Breast epithelium (tissue), 4 donors: ENCODE measurements at regions of chr19 and their contacts with region 1.

Region 1: GRCh38 chr19:54279406-54279962 is 1.4 kb downstream of the LILRB2 start:
- DNase-seq: no peak
- H3K4me3 ChIP-seq: no peak overlapping the region
- H3K27ac ChIP-seq: no peak overlapping the region
- H3K4me1 ChIP-seq: no peaks in the 10 kb centered on the region
- H3K27me3 ChIP-seq: peaks cover 0 to 48% of the 10 kb centered on the region in 2 donors
- CTCF ChIP-seq: no peak
- POLR2A ChIP-seq: no peak

Region 2: DNA sequence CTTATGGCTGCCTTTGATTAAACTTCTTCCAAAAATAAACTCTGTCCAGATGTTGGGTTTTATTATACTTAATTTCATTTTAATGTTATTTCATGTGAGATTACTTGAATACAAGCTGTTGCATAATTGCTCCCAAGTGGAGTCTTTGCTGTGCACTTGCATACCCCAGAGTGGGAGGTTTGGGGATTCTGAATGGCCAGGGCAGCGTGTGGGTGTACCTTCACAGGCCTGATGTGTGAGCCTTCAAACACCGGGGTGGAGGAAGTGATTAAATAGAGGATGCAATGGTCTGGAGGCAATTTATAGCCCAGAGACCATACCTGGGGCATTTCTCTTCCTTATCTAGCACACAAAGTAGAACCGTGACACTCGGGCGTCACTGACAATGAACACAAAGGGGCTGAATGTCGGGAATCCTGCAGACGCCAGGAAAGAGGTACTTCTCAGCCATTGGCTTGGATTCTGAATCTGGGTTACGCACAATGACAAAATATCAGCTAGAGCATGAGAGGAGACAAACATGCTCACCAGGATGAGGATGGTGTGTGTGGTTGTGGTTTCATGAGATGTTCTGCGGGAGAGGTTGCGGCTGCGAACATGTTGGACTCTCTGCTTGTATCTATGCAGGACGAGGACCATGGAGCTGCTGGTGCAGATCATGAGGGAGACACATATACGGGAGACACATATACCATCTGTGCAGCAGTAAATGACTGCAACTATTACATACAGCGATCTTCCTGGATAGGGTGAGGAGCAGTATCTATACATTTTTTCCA is 40.6 kb after region 1 on chr19:
- intact Hi-C with region 1: loop called (anchors 2 kb)
- DNase-seq: no peak
- H3K4me3 ChIP-seq: no peak overlapping the region
- H3K27ac ChIP-seq: no peak overlapping the region
- H3K4me1 ChIP-seq: no peaks in the 10 kb centered on the region
- H3K27me3 ChIP-seq: peaks cover 0 to 33% of the 10 kb centered on the region in 2 donors
- CTCF ChIP-seq: no peak
- POLR2A ChIP-seq: no peak

Region 3: GRCh38 chr19:54606891-54607796 is 327.7 kb after region 1 on chr19:
- intact Hi-C with region 1: no loop called
- DNase-seq: no peak
- H3K4me3 ChIP-seq: no peak overlapping the region
- H3K27ac ChIP-seq: no peak overlapping the region
- H3K4me1 ChIP-seq: no peaks in the 10 kb centered on the region
- H3K27me3 ChIP-seq: peaks cover 0 to 3% of the 10 kb centered on the region in 2 donors
- CTCF ChIP-seq: no peak
- POLR2A ChIP-seq: no peak

Region 4: DNA sequence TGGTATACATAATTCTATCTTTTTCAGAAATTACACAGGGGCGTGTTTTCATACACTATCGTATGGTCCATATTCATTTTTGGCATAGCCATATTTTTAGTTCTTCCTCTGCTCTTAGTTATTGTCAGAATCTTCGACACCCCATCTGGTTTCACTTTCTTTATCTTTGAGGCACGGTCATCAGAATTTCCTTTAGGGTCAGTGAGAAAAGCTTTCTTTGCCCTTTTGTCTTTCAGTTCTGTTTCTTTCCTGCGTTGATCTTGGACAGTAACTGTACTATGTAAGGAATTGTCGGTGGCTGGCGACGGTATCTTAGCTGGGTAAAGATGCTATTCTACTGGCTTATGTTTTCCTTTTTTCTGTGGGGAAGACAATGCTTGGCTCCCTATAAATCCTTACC is 513.3 kb after region 1 on chr19:
- intact Hi-C with region 1: no loop called
- DNase-seq: no peak
- H3K4me3 ChIP-seq: peak overlapping the region; percentile 23 to 46 (median 24)
- H3K27ac ChIP-seq: no peak overlapping the region
- H3K4me1 ChIP-seq: no peaks in the 10 kb centered on the region
- H3K27me3 ChIP-seq: peaks cover 0 to 14% of the 10 kb centered on the region in 2 donors
- CTCF ChIP-seq: no peak
- POLR2A ChIP-seq: no peak